Sigmoid colon (tissue), 7 donors: ENCODE measurements at regions of chr16 and their contacts with region 1.

Region 1: GRCh38 chr16:28943281-28943680 is 7.5 kb upstream of the NFATC2IP start:
- DNase-seq: no peak
- H3K4me3 ChIP-seq: no peak overlapping the region
- H3K27ac ChIP-seq: no peak overlapping the region
- H3K4me1 ChIP-seq: peaks cover 0 to 10% (median 7%) of the 10 kb centered on the region in 4 donors
- H3K27me3 ChIP-seq: no peaks in the 10 kb centered on the region
- CTCF ChIP-seq: no peak
- EP300 ChIP-seq: no peak
- POLR2A ChIP-seq: no peak

Region 2: DNA sequence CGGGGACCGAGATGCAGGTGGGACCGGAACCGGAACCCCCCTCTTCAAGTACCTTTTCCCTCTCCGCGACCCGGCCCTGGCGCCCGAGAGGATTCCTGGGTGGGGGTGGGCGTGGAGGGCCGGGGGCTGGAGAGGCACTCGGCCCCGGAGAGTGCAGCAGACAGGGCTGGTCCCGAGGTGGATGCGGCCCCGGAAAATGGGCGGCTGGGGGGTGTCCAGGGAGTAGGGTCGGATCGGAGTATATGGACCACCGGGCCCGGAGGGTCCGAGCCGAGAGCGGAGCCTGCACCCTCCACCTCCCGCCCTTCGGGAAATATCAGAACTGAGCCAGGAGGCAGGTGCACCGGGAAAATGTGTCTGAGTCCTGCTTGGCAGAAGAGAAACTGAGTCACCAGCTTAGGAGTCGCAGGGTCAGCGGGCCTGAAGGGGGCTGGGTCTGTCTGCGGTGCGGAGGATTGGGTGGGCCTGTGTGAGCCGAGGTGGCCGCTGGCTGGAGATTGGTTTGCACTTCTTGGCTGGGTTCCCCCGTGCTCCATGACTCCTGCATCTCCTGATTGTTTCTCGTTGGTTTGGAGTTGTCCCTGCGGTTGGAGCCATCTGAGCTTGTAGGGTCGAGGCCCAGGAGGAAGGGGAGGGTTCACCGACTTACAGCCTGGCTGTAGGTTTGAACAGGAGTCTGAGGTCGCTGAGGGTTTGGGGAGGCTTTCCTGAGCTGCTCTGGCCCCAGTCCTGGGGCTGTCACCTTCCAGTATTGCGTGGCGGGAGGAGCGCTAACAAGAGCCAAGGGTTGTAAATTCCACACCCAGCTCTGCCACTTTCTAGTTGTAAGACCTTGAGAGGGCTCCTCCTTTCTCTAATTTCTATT is 79.1 kb before region 1 on chr16:
- intact Hi-C with region 1: loop called (anchors 5 kb)
- DNase-seq: peak; percentile 78
- H3K4me3 ChIP-seq: peak overlapping the region; percentile 77 to 96 (median 88)
- H3K27ac ChIP-seq: peak overlapping the region; percentile 91 to 95 (median 95)
- H3K4me1 ChIP-seq: peaks cover 0 to 31% (median 28%) of the 10 kb centered on the region in 4 donors
- H3K27me3 ChIP-seq: no peaks in the 10 kb centered on the region
- CTCF ChIP-seq: no peak
- EP300 ChIP-seq: no peak
- POLR2A ChIP-seq: no peak

Region 3: DNA sequence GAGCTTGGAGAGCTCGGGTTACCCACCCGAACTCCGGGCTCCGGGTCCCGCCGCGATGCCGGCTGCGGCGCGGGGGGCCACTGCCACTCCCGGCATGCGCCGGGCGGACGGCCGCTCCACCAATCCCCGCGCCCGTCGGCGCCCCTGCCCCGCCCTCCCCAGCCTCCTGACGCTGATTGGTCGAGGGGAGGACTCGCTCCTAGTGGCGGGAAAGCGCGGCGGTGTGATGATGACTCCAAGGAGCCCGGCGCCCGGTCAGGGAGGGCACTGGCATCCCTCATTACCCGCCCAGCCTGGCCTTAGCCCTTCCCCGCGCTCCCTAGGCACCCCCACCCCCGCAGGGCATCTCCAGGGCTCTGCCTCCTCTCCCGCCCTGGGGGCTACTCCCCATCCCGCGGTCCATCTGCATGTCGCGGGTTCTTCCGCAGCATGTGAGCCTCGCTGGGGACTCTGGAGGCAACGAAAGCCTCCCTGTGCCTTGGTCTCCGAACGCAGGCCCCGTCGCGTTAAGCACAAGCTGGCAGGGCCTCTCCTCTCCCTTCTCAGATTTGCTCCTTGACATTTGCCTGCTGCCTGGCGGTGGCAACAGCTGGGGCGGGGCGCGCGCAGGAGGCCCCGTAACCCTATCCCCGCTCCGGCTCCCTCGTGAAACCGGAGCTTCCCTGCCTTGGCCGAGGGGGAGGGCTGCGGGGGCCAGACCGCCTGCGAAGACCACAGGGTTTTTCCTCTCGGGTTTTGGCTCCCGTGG is 63.3 kb before region 1 on chr16:
- intact Hi-C with region 1: loop called (anchors 2 kb)
- DNase-seq: peak; percentile 93
- H3K4me3 ChIP-seq: peak overlapping the region; percentile 35 to 66 (median 62)
- H3K27ac ChIP-seq: peak overlapping the region in 3 of 4 donors; percentile 29 to 55 (median 51)
- H3K4me1 ChIP-seq: peaks cover 0 to 16% (median 14%) of the 10 kb centered on the region in 4 donors
- H3K27me3 ChIP-seq: peaks cover 5 to 33% (median 12%) of the 10 kb centered on the region in 3 donors
- CTCF ChIP-seq: peak in 2 of 4 experiments; percentile 2 to 23
- EP300 ChIP-seq: no peak
- POLR2A ChIP-seq: no peak